ENCODE measurements at regions of chr14 and their contacts with region 1.

Region 1: DNA sequence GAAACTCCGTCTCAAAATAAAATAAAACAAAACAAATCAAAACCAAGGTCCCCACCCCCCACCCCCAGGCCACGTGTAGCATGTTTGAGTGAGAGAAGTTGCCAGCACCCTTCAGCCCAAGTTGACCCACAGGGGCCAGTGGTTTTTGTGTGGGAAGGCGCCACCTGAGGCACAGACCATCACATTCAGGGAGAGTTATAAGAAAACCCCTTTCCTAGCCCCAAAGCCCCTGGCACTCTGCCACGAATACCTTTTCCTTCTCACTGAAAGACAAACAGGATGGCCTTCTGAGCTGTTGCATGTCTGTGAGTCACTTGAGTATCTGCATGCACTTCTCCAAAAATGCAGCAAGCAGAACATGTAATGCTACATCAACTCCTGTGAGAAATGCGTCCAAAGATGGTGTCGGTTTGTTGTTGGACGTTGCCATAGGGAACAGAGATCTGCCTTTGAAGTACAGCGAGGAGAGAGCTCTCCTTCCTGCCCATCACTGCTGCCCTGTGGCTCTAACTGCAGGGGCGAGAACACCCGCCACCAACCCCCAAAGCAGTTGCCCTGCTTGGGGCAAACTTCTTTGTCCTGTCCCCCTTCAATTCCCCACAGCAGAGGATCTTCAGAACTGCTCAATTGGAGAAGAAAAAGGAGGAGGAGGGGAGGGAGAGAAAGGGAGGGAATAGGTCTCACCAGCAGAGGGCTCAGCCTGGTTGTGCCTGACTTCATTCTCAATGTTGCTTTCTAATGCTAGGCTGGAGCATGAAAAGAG is 2.7 kb upstream of the TRAF3 start:
- DNase-seq: peak; percentile 74
- H3K4me3 Mint-ChIP-seq: peak overlapping the region; percentile 9
- H3K27ac Mint-ChIP-seq: peak overlapping the region; percentile 86
- H3K4me1 Mint-ChIP-seq: peaks cover 35% of the 10 kb centered on the region
- H3K27me3 Mint-ChIP-seq: no peaks in the 10 kb centered on the region

Region 2: GRCh38 chr14:102524466-102525218 is 249.9 kb before region 1 on chr14:
- CTCF ChIA-PET with region 1: interaction called, 3 read pairs
- POLR2A ChIA-PET with region 1: no interaction called
- intact Hi-C with region 1: loop called (anchors 5 kb)
- DNase-seq: peak; percentile 98
- H3K4me3 Mint-ChIP-seq: peak overlapping the region; percentile 68
- H3K27ac Mint-ChIP-seq: peak overlapping the region; percentile 26
- H3K4me1 Mint-ChIP-seq: peaks cover 28% of the 10 kb centered on the region
- H3K27me3 Mint-ChIP-seq: no peaks in the 10 kb centered on the region

Region 3: DNA sequence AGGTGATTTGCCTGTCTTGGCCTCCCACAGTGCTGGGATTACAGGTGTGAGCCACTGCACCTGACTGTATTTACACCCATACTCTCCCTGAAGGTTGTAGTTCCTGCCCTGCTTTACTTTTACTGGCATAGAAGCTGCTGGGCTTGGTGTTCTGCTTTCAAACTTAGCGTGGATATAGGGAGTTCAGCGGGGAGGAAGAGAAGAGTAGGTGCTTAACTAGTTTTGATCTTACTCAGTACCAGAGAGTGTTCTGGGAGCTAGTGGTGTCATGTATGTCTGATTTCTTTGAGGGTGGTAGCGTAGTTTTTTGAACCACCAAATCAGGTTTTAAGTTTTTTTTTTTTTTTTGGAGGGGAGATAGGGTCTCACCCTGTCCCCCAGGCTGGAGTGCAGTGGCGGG is 168.3 kb before region 1 on chr14:
- CTCF ChIA-PET with region 1: no interaction called
- POLR2A ChIA-PET with region 1: no interaction called
- intact Hi-C with region 1: no loop called
- DNase-seq: peak; percentile 28
- H3K4me3 Mint-ChIP-seq: no peak overlapping the region
- H3K27ac Mint-ChIP-seq: no peak overlapping the region
- H3K4me1 Mint-ChIP-seq: peaks cover 54% of the 10 kb centered on the region
- H3K27me3 Mint-ChIP-seq: no peaks in the 10 kb centered on the region

Region 4: GRCh38 chr14:102882226-102882906 is 107.8 kb after region 1 on chr14:
- CTCF ChIA-PET with region 1: interaction called, 3 read pairs
- POLR2A ChIA-PET with region 1: no interaction called
- intact Hi-C with region 1: loop called (anchors 2 kb)
- DNase-seq: no peak
- H3K4me3 Mint-ChIP-seq: no peak overlapping the region
- H3K27ac Mint-ChIP-seq: peak overlapping the region; percentile 11
- H3K4me1 Mint-ChIP-seq: peaks cover 27% of the 10 kb centered on the region
- H3K27me3 Mint-ChIP-seq: no peaks in the 10 kb centered on the region

Region 5: GRCh38 chr14:102917469-102918211 is 143.1 kb after region 1 on chr14:
- CTCF ChIA-PET with region 1: interaction called, 5 read pairs
- POLR2A ChIA-PET with region 1: no interaction called
- intact Hi-C with region 1: loop called (anchors 2 kb)
- DNase-seq: peak; percentile 76
- H3K4me3 Mint-ChIP-seq: no peak overlapping the region
- H3K27ac Mint-ChIP-seq: no peak overlapping the region
- H3K4me1 Mint-ChIP-seq: no peaks in the 10 kb centered on the region
- H3K27me3 Mint-ChIP-seq: peaks cover 1% of the 10 kb centered on the region

Measured in activated CD4-positive, alpha-beta memory T cell treated with anti-CD3 and anti-CD28 coated beads for 36 hours (primary cell).